Cardiac septum (tissue), 1 donor: ENCODE measurements at regions of chr22 and their contacts with region 1.

Region 1: GRCh38 chr22:17158568-17159503 is at the start of gene HDHD5:
- DNase-seq: peak; percentile 96
- total RNA-seq, gene HDHD5: 39.6 TPM

Region 2: GRCh38 chr22:17084554-17085276 is 74.1 kb before region 1 on chr22 and contains the start of gene IL17RA:
- intact Hi-C with region 1: loop called (anchors 2 kb)
- DNase-seq: peak; percentile 98
- total RNA-seq, gene IL17RA: 6.0 TPM